Gastrocnemius medialis (tissue), 4 donors: ENCODE measurements at regions of chr3 and their contacts with region 1.

Region 1: GRCh38 chr3:179147873-179148615 is at the start of gene PIK3CA:
- DNase-seq: peak; percentile 96 to 97
- ATAC-seq: peak; percentile 94 to 95
- H3K4me3 ChIP-seq: peak within 1 kb of the TSS; percentile 68 to 96 (median 94)
- H3K27ac ChIP-seq: peak within 1 kb of the TSS; percentile 93 to 98 (median 94)
- H3K4me1 ChIP-seq: peaks cover 30 to 33% of the 10 kb centered on the region in 2 donors
- H3K27me3 ChIP-seq: no peaks in the 10 kb centered on the region
- CTCF ChIP-seq: no peak
- POLR2A ChIP-seq: peak; percentile 44 to 72
- total RNA-seq, gene PIK3CA: 16.0 to 29.4 (median 23.1) TPM

Region 2: DNA sequence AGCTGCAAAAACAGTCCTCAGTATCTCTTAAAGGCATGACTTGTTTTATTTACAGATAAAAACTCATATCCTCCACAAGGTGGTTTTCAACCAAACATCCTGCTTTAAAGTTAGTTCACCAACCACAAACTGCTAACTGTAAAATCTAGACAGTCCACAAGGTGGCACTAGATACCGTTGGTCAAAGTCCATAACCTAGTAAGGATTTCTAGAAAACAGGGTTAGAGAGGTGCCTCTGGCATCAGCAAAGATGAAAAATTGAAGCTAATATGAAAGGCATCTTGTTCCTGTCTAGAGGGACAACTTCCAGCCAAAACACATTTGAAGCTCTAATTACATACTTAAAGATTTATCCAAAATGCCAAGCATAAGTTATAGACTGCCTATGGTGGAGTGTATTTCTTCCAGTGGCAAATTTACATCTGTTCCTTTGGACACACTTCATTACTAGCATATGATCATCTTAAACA is 132.5 kb before region 1 on chr3:
- in situ Hi-C with region 1: no loop called
- intact Hi-C with region 1: loop called (anchors 2 kb)
- DNase-seq: no peak
- ATAC-seq: peak; percentile 65 to 83
- H3K4me3 ChIP-seq: no peak overlapping the region
- H3K27ac ChIP-seq: no peak overlapping the region
- H3K4me1 ChIP-seq: peaks cover 0 to 10% of the 10 kb centered on the region in 2 donors
- H3K27me3 ChIP-seq: no peaks in the 10 kb centered on the region
- CTCF ChIP-seq: peak; percentile 62 to 82 (median 74)
- POLR2A ChIP-seq: no peak

Region 3: DNA sequence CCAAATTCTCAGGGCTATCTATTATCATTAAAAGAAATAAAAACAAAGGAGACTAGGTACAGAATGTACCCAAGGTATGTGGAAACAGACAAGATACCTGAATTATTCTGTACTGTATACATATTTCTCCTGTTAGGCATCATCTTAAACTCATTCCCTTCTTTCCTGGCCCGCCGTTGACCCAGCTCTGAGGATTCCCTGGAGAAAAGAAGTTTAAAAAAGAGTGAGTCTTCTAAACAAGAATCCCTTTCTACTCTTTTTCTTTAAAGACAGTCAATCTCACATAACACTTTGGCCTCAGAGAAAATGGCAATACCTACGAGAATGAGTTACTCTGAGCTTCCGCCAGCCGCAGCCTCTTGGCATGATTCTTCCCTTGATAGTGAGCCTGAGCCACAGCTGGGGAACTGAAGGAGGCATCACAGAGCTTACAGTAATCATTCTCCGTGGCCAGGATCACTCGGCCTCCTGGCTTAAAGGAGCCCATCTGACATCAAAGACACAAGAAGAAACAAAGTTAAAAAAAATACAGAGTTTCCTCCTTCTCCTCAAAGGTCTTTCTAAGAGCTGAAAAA is 120.6 kb before region 1 on chr3:
- in situ Hi-C with region 1: no loop called
- intact Hi-C with region 1: no loop called
- DNase-seq: no peak
- ATAC-seq: no peak
- H3K4me3 ChIP-seq: no peak overlapping the region
- H3K27ac ChIP-seq: no peak overlapping the region
- H3K4me1 ChIP-seq: no peaks in the 10 kb centered on the region
- H3K27me3 ChIP-seq: no peaks in the 10 kb centered on the region
- CTCF ChIP-seq: no peak
- POLR2A ChIP-seq: no peak

Region 4: GRCh38 chr3:179181021-179181472 is 33.0 kb after region 1 on chr3:
- in situ Hi-C with region 1: no loop called
- intact Hi-C with region 1: loop called (anchors 5 kb)
- DNase-seq: no peak
- ATAC-seq: peak; percentile 81
- H3K4me3 ChIP-seq: no peak overlapping the region
- H3K27ac ChIP-seq: peak overlapping the region; percentile 52 to 72 (median 67)
- H3K4me1 ChIP-seq: peaks cover 62 to 68% of the 10 kb centered on the region in 2 donors
- H3K27me3 ChIP-seq: no peaks in the 10 kb centered on the region
- CTCF ChIP-seq: no peak
- POLR2A ChIP-seq: peak in 1 of 2 donors; percentile 6

Region 5: DNA sequence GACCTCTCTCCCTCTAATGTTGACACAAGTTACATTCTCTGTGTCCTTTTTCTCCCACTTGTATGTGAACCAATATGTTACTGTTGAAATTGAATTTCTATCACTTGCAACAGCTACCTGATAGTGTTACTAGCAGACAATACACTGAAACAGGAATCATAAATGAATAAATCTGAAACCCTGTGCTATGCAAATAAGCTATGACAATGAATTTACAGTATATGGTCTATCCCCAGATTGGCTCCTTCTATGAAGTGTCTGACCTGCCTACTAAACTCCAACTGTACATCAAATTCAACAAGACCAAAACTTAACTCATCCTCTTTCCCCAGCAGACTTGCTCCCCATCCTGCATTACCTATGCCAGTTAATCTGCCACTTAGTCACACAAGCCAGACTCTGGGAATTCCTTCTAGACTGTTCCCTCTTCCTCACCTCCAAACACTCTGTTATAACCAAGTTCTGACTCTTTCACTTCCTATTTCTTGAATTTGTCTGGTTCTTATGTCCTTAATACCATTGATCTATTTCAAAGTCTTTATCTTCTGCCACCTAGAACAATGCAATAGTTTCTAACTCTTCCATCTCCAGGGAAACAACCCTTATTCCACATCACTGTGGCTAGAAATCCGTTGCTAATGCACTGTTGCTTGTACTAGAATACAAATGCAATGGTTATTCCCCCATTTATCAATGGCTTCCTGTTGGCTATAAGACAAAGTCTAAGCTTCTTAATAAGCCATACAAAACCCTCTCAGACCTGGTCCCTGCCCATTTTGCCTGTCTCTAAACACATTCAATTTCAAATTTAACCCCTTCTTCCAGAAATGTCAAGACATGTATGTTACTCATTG is 161.4 kb after region 1 on chr3:
- in situ Hi-C with region 1: loop called in 2 of 4 experiments (anchors 5 to 10 kb)
- intact Hi-C with region 1: no loop called
- DNase-seq: no peak
- ATAC-seq: no peak
- H3K4me3 ChIP-seq: no peak overlapping the region
- H3K27ac ChIP-seq: no peak overlapping the region
- H3K4me1 ChIP-seq: no peaks in the 10 kb centered on the region
- H3K27me3 ChIP-seq: no peaks in the 10 kb centered on the region
- CTCF ChIP-seq: no peak
- POLR2A ChIP-seq: no peak

Region 6: DNA sequence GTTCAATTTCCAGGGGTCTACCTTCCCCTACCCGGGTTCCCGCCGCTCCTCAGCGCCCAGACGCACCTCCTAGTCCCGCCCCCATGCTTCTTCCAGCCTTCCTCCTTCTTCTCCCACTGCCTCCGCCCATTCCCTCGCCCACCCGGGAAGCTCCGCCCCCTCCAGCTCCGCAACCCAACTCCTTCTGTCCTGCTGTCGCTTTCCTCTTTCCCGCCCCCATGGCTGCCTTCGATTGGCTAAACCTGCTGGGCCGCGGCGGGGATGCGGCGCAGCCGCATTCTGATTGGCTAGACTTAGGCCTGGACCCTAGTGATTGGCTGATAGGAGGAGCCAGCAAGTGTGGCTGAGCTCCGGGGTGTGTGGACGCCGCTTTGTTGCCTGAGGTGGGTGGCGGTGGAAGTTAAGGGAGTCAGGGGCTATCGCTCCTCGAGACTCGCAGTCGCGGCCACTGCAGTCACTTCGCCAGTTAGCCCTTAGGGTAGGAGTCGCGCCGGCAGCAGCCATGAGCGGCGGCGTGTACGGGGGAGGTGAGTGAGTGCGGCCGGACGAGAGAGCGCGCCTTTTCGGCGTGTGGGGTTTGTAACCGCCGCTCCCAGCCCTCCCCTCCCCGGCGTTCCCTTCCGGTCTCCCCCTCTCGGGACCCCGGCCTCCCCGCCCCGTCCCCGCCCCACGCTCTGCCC is 414.7 kb after region 1 on chr3 and contains the start of gene ACTL6A:
- in situ Hi-C with region 1: loop called in 1 of 4 experiments (anchors 25 kb)
- intact Hi-C with region 1: loop called (anchors 5 kb)
- DNase-seq: peak; percentile 100
- ATAC-seq: peak; percentile 95 to 98
- H3K4me3 ChIP-seq: peak within 1 kb of the TSS; percentile 75 to 97 (median 86)
- H3K27ac ChIP-seq: peak within 1 kb of the TSS; percentile 86 to 92 (median 88)
- H3K4me1 ChIP-seq: peaks cover 8 to 12% of the 10 kb centered on the region in 2 donors
- H3K27me3 ChIP-seq: no peaks in the 10 kb centered on the region
- CTCF ChIP-seq: no peak
- POLR2A ChIP-seq: peak; percentile 59 to 79
- total RNA-seq, gene ACTL6A: 12.1 to 27.8 (median 21.0) TPM